Activated T-helper 1 cell treated with anti-CD3 and anti-CD28 coated beads, Interleukin-12 subunit alpha, Interleukin-12 subunit beta, Interleukin-2, Interleukin-4 antibody, amounts not matched to agents 30 ng/mL and 10 ng/mL and 1 ng/mL, durations not matched to agents 14 hours and 24 hours and 36 hours (primary cell): ENCODE measurements at regions of chr5 and their contacts with region 1.

Region 1: DNA sequence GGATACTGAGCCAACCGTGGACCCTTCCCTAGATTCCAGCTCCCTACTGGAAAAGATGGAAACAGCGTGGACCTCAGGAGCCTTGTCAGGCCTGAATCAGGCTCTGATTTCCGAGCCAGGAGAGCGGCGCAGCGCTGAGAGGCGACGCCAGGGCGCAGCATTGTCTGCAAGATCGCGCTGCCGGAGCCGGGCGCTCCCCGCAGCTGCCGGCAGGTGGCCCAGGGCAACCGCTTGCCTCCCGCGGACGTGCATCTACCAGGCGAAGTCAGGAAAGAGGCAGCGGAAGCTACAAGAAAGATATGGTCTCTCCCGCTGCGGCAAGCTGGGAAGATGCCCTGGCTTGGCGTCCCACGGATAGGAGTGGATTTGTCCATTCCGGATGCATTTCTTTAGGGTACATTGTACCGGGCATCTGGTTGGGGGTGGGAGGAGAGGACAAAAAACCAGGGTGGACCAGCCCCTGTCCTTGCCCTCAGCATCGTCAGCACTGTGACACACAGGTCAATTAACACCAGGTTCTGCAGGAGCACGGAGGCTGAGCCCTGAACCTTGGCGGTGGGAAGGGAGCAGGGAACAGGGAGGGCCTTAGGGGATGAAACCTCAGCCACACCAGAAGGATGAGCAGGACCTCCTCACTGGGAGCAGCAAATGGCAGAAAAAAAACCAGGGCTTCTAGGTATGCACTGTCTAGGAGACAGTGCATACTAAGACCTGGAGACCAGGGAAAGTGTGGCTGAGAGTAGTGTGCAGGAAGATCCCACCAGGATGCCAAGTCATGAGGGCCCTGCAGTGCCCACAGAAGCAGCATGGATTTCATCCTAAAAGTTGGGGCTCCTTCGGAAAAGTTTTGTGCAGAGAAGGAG is 55.9 kb downstream of the SFXN1 start:
- DNase-seq: peak; percentile 79
- H3K4me3 Mint-ChIP-seq: peak overlapping the region; percentile 73
- H3K27ac Mint-ChIP-seq: peak overlapping the region; percentile 78
- H3K4me1 Mint-ChIP-seq: peaks cover 68% of the 10 kb centered on the region
- H3K27me3 Mint-ChIP-seq: no peaks in the 10 kb centered on the region

Region 2: DNA sequence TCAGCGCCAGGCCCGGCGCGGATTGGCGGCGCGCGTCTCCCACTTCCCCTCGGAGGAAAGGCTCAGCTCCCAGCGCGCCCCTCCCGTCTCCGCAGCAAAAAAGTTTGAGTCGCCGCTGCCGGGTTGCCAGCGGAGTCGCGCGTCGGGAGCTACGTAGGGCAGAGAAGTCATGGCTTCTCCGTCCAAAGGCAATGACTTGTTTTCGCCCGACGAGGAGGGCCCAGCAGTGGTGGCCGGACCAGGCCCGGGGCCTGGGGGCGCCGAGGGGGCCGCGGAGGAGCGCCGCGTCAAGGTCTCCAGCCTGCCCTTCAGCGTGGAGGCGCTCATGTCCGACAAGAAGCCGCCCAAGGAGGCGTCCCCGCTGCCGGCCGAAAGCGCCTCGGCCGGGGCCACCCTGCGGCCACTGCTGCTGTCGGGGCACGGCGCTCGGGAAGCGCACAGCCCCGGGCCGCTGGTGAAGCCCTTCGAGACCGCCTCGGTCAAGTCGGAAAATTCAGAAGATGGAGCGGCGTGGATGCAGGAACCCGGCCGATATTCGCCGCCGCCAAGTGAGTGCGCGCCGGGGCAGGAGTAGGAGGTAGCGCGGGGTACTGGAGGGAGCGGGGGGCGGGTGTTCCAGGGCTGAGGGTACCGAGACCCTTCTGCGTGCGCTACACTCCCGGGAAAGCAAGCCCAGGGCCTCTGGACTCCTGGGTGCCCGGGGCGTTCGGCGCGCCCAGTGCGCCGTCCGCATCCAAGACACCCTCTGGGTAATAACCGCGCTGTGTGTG is 809.6 kb before region 1 on chr5 and contains the start of gene MSX2:
- intact Hi-C with region 1: no loop called
- DNase-seq: no peak
- H3K4me3 Mint-ChIP-seq: peak within 1 kb of the TSS; percentile 15
- H3K27ac Mint-ChIP-seq: peak within 1 kb of the TSS; percentile 31
- H3K4me1 Mint-ChIP-seq: peaks cover 5% of the 10 kb centered on the region
- H3K27me3 Mint-ChIP-seq: peaks cover 82% of the 10 kb centered on the region
- total RNA-seq, gene MSX2: not detected in 2 replicates

Region 3: DNA sequence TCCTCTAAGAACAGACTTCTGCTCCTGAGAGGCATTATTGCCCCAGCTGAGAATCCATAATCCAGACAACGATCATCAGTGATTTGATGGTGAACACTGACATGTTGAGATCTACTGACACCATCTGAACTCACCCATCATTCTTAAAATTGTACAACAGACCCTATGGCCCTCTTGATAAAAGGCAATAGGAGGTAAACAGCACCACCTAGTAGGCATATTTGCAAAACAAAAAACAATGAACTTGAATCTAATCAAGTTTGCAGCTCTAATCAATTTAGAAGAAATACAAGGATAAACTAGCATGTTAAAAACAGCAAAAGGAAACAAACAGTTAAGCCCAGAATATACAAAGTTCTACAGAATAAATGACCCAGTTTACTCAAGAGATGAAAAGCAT is 33.7 kb after region 1 on chr5:
- intact Hi-C with region 1: loop called (anchors 1 kb)
- DNase-seq: no peak
- H3K4me3 Mint-ChIP-seq: no peak overlapping the region
- H3K27ac Mint-ChIP-seq: no peak overlapping the region
- H3K4me1 Mint-ChIP-seq: peaks cover 6% of the 10 kb centered on the region
- H3K27me3 Mint-ChIP-seq: peaks cover 25% of the 10 kb centered on the region

Region 4: DNA sequence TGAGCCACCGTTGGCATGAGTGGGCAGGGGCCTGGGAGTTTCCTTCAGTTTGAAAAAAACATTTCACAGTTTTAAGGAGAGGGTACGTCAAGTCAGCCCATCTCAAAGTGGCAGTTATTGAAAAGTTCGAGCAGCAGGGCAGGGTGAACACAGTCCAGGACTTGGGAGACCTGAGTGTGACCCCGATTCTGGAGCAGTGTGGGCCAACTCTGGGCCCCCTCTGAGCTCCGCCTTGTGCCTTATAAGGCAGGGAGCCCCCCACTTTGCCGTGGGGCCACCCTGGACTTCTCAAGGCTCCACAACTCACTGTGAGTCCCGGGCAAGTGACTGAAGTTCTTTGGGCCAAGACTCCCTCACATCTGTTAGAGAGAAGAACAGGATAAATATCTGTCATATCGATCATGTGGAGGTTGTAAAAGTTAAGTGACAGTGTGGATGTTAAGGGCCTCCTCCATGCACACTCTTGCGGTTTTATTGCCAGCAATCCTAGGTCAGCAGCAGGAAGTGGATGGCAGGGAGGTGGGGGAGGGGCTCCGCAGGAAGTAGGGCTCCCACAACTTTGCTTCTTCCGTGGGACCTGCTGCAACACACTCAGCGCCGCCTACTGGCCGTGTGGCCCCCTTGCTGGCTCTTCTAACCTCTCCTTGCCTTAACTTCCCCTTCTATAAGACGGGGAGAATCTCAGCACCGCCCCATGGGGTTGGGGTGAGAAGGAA is 162.0 kb after region 1 on chr5:
- intact Hi-C with region 1: loop called (anchors 1 kb)
- DNase-seq: peak; percentile 63
- H3K4me3 Mint-ChIP-seq: peak overlapping the region; percentile 33
- H3K27ac Mint-ChIP-seq: peak overlapping the region; percentile 78
- H3K4me1 Mint-ChIP-seq: peaks cover 39% of the 10 kb centered on the region
- H3K27me3 Mint-ChIP-seq: no peaks in the 10 kb centered on the region

Region 5: GRCh38 chr5:175718401-175719108 is 184.3 kb after region 1 on chr5:
- intact Hi-C with region 1: loop called (anchors 1 kb)
- DNase-seq: peak; percentile 38
- H3K4me3 Mint-ChIP-seq: no peak overlapping the region
- H3K27ac Mint-ChIP-seq: no peak overlapping the region
- H3K4me1 Mint-ChIP-seq: peaks cover 7% of the 10 kb centered on the region
- H3K27me3 Mint-ChIP-seq: peaks cover 4% of the 10 kb centered on the region

Region 6: DNA sequence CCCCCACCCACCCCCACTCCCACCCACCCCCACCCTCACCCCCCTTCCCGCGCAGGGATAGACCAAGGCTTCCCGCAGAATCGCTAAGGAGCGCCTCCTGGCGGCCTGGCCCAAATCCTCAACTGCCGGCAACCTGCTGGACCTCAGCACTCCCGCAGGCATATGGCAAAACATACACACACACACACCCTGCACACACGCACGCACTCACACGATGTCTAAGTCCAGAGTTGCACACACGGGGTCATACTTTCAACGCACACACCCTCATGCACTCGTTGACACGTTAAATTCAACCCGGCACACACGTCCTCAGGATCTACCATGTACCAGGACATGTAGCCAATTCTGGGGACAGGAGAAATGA is 338.8 kb after region 1 on chr5:
- intact Hi-C with region 1: loop called (anchors 10 kb)
- DNase-seq: no peak
- H3K4me3 Mint-ChIP-seq: no peak overlapping the region
- H3K27ac Mint-ChIP-seq: no peak overlapping the region
- H3K4me1 Mint-ChIP-seq: peaks cover 5% of the 10 kb centered on the region
- H3K27me3 Mint-ChIP-seq: peaks cover 51% of the 10 kb centered on the region